ENCODE measurements at regions of chr3 and their contacts with region 1.

Region 1: GRCh38 chr3:160003520-160004128 is 15.0 kb downstream of the IL12A start:
- DNase-seq: peak; percentile 75 to 78 (median 77)
- H3K4me3 ChIP-seq: no peak overlapping the region
- H3K27ac ChIP-seq: no peak overlapping the region
- H3K4me1 ChIP-seq: peaks cover 0 to 18% (median 14%) of the 10 kb centered on the region in 4 experiments
- H3K27me3 ChIP-seq: no peaks in the 10 kb centered on the region

Region 2: DNA sequence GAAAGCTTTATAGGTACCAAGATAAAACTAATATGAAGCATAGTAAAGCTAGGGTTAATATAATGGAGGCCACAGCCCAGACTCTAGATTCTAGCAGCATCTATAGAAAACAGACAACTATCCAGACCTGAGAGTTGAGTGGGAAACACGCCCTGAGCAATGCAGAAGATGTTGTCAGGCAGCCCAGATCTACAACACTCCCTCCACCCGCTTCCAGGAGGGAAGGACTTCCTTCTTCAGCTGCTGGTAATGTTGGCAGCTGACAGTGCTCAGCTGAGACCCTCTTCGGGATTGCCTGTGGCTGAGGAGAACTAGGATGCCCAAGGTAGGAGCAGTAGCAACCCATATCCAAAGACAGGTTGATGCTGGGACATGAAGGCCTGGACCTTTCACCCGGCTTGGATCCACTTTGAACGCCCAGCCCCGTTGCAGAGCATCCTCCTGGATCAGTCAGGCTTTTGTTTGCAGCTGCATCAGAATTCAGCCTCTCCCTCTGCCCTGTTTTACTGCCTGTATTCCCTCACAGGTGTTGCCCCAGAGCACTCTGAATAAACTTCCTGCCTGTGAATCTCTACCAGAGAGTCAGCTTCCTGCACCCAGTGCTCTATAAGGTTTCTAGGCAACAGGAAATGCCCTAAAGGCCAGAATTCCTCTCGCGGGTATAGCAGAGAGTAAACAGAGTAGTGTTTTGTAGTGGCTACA is 189.7 kb before region 1 on chr3:
- CTCF ChIA-PET with region 1: interaction called, 17 read pairs
- POLR2A ChIA-PET with region 1: no interaction called
- DNase-seq: no peak
- H3K4me3 ChIP-seq: no peak overlapping the region
- H3K27ac ChIP-seq: no peak overlapping the region
- H3K4me1 ChIP-seq: peaks cover 0 to 13% (median 8%) of the 10 kb centered on the region in 4 experiments
- H3K27me3 ChIP-seq: no peaks in the 10 kb centered on the region

Region 3: DNA sequence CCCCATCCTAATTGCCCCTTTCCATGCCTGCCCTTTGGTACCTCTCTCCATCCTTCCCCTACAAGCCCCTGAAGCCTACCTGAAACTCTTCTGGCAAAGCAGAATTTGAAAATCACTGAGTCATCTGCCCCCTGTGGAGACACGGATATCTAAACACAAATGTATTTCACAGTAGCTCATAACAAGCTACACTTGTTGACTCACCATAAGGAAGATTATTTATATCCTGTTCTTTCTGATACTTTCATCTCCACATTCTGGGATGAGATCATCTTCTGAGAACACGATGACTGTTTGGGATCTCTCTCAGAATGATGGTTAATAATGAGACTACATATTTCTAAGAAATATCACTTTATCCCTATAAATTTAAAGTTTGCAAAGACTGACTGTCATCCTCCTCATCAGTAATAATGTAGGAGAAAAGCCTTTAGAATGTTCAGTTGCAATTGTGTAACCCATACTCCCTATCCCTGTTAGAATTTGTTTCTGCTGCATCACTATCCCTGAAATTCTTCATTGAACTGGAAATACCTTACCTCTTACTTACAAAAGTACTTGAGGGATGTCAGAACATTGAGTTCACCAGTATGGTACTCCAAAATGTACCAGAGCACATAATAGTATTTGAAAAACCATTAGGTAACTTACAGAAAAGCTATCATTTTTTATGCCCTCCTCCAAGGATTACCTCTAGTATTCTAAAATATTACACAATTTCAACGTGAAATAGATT is 131.1 kb before region 1 on chr3:
- CTCF ChIA-PET with region 1: interaction called, 49 read pairs
- POLR2A ChIA-PET with region 1: no interaction called
- DNase-seq: peak; percentile 48 to 81 (median 75)
- H3K4me3 ChIP-seq: no peak overlapping the region
- H3K27ac ChIP-seq: no peak overlapping the region
- H3K4me1 ChIP-seq: peaks cover 0 to 30% (median 6%) of the 10 kb centered on the region in 4 experiments
- H3K27me3 ChIP-seq: no peaks in the 10 kb centered on the region

Region 4: GRCh38 chr3:159929435-159930141 is 74.0 kb before region 1 on chr3:
- CTCF ChIA-PET with region 1: interaction called, 192 read pairs
- POLR2A ChIA-PET with region 1: interaction called, 3 read pairs
- DNase-seq: peak; percentile 95 to 97 (median 97)
- H3K4me3 ChIP-seq: peak overlapping the region in 2 of 7 experiments; percentile 13 to 20
- H3K27ac ChIP-seq: peak overlapping the region in 1 of 2 experiments; percentile 73
- H3K4me1 ChIP-seq: peaks cover 0 to 27% (median 23%) of the 10 kb centered on the region in 4 experiments
- H3K27me3 ChIP-seq: no peaks in the 10 kb centered on the region

Region 5: GRCh38 chr3:159978353-159978752 is 25.3 kb before region 1 on chr3:
- CTCF ChIA-PET with region 1: interaction called, 231 read pairs
- POLR2A ChIA-PET with region 1: no interaction called
- DNase-seq: peak in 2 of 3 donors; percentile 77 to 84
- H3K4me3 ChIP-seq: peak overlapping the region in 1 of 7 experiments; percentile 23
- H3K27ac ChIP-seq: peak overlapping the region; percentile 9 to 44
- H3K4me1 ChIP-seq: peaks cover 0 to 10% (median 0%) of the 10 kb centered on the region in 4 experiments
- H3K27me3 ChIP-seq: no peaks in the 10 kb centered on the region

Region 6: GRCh38 chr3:160027541-160028195 is 24.0 kb after region 1 on chr3:
- CTCF ChIA-PET with region 1: interaction called, 20 read pairs
- POLR2A ChIA-PET with region 1: interaction called, 3 read pairs
- DNase-seq: peak; percentile 79 to 96 (median 95)
- H3K4me3 ChIP-seq: peak overlapping the region in 1 of 7 experiments; percentile 23
- H3K27ac ChIP-seq: peak overlapping the region; percentile 90 to 94
- H3K4me1 ChIP-seq: peaks cover 5 to 58% (median 38%) of the 10 kb centered on the region in 4 experiments
- H3K27me3 ChIP-seq: no peaks in the 10 kb centered on the region

Measured in common myeloid progenitor, CD34-positive (primary cell).